ENCODE measurements at regions of chr17 and their contacts with region 1.

Region 1: GRCh38 chr17:75289115-75289831 is at the start of gene SLC25A19:
- DNase-seq: peak; percentile 97 to 98 (median 97)
- H3K4me3 ChIP-seq: peak within 1 kb of the TSS; percentile 52 to 96 (median 92)
- H3K4me3 Mint-ChIP-seq: peak within 1 kb of the TSS; percentile 91 to 96
- H3K27ac ChIP-seq: peak within 1 kb of the TSS; percentile 98 to 100
- H3K27ac Mint-ChIP-seq: peak within 1 kb of the TSS; percentile 100
- H3K4me1 ChIP-seq: peaks cover 44 to 47% of the 10 kb centered on the region in 2 donors
- H3K4me1 Mint-ChIP-seq: peaks cover 42% of the 10 kb centered on the region
- H3K27me3 ChIP-seq: no peaks in the 10 kb centered on the region
- H3K27me3 Mint-ChIP-seq: no peaks in the 10 kb centered on the region
- CTCF ChIP-seq: no peak
- polyA plus RNA-seq, gene SLC25A19: 14.4 to 21.5 (median 18.8) TPM

Region 2: DNA sequence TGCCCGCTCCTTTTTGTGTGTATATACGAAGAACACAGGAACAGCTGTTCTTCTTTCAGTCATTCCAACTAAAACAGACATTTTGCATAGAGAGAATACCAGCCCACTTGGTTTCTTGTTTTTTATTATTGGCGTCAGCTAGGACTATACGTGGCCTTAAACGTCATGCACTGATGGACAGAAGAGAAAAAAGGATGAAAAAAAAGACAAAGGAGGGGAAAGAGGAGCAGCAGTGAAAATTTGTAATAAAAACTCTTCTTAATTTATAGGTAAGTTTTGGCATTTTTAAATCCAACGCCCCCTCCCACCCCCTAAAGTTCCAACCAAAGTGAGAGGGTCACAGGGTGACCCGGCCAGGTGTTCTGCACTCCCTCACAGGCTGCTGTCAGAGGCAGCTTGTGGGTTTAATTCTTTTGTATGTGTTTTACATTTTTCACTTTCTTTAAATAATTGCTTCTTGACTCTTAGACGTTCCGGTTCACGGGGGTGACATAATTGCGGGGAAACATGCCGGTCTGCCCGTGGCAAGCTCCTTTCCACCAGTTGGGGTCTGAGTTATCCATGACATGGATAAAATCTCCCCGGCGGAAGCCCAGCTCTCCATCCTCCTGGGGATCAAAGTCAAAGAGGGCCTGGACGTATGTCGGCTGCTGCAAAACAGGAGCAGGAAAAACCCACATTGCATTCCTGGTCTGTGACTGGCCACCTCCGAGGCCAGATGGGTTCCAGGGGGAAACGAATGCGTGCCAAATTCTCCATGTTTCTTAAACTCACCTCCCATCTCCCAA is 30.8 kb after region 1 on chr17:
- intact Hi-C with region 1: loop called (anchors 1 to 5 kb)
- DNase-seq: no peak
- H3K4me3 ChIP-seq: no peak overlapping the region
- H3K4me3 Mint-ChIP-seq: no peak overlapping the region
- H3K27ac ChIP-seq: peak overlapping the region in 1 of 2 donors; percentile 100
- H3K27ac Mint-ChIP-seq: peak overlapping the region; percentile 11 to 63 (median 54)
- H3K4me1 ChIP-seq: peaks cover 56 to 65% of the 10 kb centered on the region in 2 donors
- H3K4me1 Mint-ChIP-seq: peaks cover 54% of the 10 kb centered on the region
- H3K27me3 ChIP-seq: no peaks in the 10 kb centered on the region
- H3K27me3 Mint-ChIP-seq: peaks cover 0 to 1% (median 0%) of the 10 kb centered on the region in 3 donors
- CTCF ChIP-seq: no peak

Region 3: DNA sequence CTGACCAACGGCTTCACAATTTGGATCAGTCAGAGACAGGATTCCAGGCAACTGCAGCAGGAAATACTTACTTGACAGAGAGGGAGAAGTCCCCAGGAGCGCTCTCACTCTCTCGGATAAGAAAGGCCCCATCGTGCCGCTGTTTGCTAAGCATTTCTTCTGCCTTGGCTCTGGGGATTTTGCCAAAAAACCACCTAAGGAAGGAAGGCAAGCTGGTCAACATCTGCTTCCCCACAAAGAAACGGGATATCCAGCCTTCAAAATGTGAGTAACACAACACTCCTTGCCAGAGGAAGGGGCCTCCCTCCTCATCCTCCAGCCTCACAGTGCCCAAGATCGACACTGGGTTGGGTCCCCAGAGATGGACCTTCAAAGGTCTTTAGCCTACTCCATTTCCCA is 36.6 kb after region 1 on chr17:
- intact Hi-C with region 1: loop called (anchors 1 to 5 kb)
- DNase-seq: peak in 1 of 3 donors; percentile 83
- H3K4me3 ChIP-seq: peak overlapping the region in 1 of 3 experiments; percentile 33
- H3K4me3 Mint-ChIP-seq: peak overlapping the region in 1 of 2 donors; percentile 55
- H3K27ac ChIP-seq: peak overlapping the region; percentile 63 to 80
- H3K27ac Mint-ChIP-seq: peak overlapping the region; percentile 76 to 90 (median 86)
- H3K4me1 ChIP-seq: peaks cover 51 to 54% of the 10 kb centered on the region in 2 donors
- H3K4me1 Mint-ChIP-seq: peaks cover 54% of the 10 kb centered on the region
- H3K27me3 ChIP-seq: no peaks in the 10 kb centered on the region
- H3K27me3 Mint-ChIP-seq: no peaks in the 10 kb centered on the region
- CTCF ChIP-seq: no peak

Region 4: GRCh38 chr17:75393523-75394331 is 104.5 kb after region 1 on chr17:
- intact Hi-C with region 1: loop called in 1 of 2 experiments (anchors 5 kb)
- DNase-seq: peak; percentile 94 to 96 (median 95)
- H3K4me3 ChIP-seq: peak overlapping the region; percentile 28 to 71 (median 42)
- H3K4me3 Mint-ChIP-seq: peak overlapping the region; percentile 80 to 90
- H3K27ac ChIP-seq: peak overlapping the region; percentile 65 to 71
- H3K27ac Mint-ChIP-seq: peak overlapping the region; percentile 85 to 95 (median 93)
- H3K4me1 ChIP-seq: peaks cover 50 to 68% of the 10 kb centered on the region in 2 donors
- H3K4me1 Mint-ChIP-seq: peaks cover 73% of the 10 kb centered on the region
- H3K27me3 ChIP-seq: no peaks in the 10 kb centered on the region
- H3K27me3 Mint-ChIP-seq: no peaks in the 10 kb centered on the region
- CTCF ChIP-seq: peak; percentile 15

Region 5: GRCh38 chr17:75405365-75406221 is 116.3 kb after region 1 on chr17 and contains the start of gene GRB2:
- intact Hi-C with region 1: loop called in 1 of 2 experiments (anchors 2 kb)
- DNase-seq: peak; percentile 96 to 97 (median 97)
- H3K4me3 ChIP-seq: peak within 1 kb of the TSS; percentile 88 to 100 (median 93)
- H3K4me3 Mint-ChIP-seq: peak within 1 kb of the TSS; percentile 98 to 99
- H3K27ac ChIP-seq: peak within 1 kb of the TSS; percentile 91 to 95
- H3K27ac Mint-ChIP-seq: peak within 1 kb of the TSS; percentile 97 to 100 (median 98)
- H3K4me1 ChIP-seq: peaks cover 40 to 43% of the 10 kb centered on the region in 2 donors
- H3K4me1 Mint-ChIP-seq: peaks cover 37% of the 10 kb centered on the region
- H3K27me3 ChIP-seq: no peaks in the 10 kb centered on the region
- H3K27me3 Mint-ChIP-seq: peaks cover 0 to 4% (median 0%) of the 10 kb centered on the region in 3 donors
- CTCF ChIP-seq: no peak
- polyA plus RNA-seq, gene GRB2: 164 to 338 (median 262) TPM

Region 6: DNA sequence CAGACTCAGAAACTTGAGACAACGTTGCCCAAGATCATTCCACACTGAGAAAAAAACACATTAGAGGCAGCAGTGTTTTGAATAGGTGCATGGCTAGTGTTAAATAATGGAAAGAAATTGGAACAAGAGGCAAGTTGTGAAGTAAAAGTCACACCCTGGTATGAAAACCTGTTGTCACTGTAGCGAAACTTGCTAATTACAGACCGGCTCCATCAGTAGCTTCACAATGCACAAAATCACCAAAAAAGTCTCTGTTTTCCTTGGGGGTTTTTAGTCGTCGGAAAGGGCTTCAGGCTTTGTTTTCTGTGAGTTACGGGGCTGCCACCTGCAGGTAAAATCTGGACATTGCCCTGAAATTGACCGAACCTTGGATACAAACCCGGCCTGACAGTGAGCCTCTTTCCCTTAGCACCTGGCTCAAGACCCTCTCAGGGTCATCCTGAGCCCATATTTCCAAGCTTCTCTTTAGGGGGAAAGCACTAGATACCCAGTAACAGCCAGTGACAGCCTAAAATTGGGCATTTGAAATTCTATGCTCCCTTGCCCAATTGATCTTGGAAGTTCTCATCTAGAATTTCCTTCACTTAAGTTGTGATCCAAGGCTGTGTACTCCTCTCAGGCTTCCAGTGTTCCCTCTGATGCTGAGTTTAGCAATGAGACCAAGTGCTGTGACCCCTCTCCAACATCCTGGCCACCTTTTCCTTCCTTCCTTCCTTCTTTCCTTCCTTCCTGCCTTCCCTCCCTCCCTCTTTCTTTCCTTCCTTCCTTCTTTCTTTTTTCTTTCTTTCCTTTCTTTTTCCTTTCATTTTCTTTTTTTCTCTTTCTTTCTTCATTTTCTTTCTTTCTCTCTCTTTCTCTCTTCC is 123.4 kb after region 1 on chr17:
- intact Hi-C with region 1: loop called in 1 of 2 experiments (anchors 2 kb)
- DNase-seq: peak; percentile 57 to 74 (median 59)
- H3K4me3 ChIP-seq: peak overlapping the region in 1 of 3 experiments; percentile 57
- H3K4me3 Mint-ChIP-seq: peak overlapping the region; percentile 41 to 76
- H3K27ac ChIP-seq: no peak overlapping the region
- H3K27ac Mint-ChIP-seq: peak overlapping the region in 2 of 7 donors; percentile 25 to 37
- H3K4me1 ChIP-seq: peaks cover 6 to 12% of the 10 kb centered on the region in 2 donors
- H3K4me1 Mint-ChIP-seq: peaks cover 27% of the 10 kb centered on the region
- H3K27me3 ChIP-seq: no peaks in the 10 kb centered on the region
- H3K27me3 Mint-ChIP-seq: no peaks in the 10 kb centered on the region
- CTCF ChIP-seq: peak; percentile 80

Measured in CD14-positive monocyte (primary cell).